Activated CD4-positive, alpha-beta memory T cell treated with anti-CD3 and anti-CD28 coated beads for 36 hours (primary cell): ENCODE measurements at regions of chr12 and their contacts with region 1.

Region 1: DNA sequence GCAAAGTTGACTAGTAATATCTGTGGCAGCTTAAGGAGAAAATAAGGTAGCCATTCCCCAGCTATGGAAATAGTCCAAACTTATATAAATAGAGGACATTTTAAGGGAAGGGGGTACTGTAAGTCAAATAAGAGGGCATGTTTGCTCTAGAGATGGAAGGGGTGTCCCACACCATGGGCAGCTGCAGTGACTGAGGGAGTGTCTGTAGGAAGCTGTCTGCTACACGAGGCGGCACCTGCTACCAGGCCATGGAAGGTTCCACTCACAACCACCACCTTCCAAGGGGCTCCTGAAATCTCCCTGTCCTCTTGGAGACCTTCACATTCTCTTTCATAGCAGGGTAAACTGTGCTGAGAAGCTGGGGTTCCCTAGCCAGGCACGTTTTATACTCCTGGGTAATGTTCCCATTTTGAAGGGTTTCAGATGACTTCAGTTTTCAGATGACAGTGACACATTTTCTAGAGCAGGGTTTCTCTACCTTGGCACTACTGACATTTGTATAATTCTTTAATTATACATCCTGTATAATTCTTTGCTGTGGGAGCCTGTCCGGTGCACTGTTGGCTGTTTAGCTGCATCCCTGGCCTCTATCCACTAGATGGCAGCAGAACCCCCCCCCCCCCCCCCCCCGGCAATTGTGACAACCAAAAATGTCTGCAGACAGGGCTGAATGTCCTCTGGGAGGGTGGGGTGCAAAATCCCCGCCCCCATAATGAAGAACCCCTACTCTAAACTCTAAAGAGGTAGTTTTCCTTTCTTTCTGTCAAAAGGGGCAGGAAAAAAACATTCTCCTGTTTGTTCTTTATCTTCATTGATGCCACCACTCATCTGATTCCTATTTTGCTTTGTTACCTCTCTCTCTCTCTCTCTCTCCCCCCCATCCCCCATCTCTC is 11.6 kb upstream of the SMCO2 start:
- DNase-seq: peak; percentile 15
- H3K4me3 Mint-ChIP-seq: no peak overlapping the region
- H3K27ac Mint-ChIP-seq: no peak overlapping the region
- H3K4me1 Mint-ChIP-seq: peaks cover 10% of the 10 kb centered on the region
- H3K27me3 Mint-ChIP-seq: peaks cover 15% of the 10 kb centered on the region

Region 2: GRCh38 chr12:26471560-26471959 is 963.4 kb before region 1 on chr12:
- CTCF ChIA-PET with region 1: no interaction called
- POLR2A ChIA-PET with region 1: no interaction called
- intact Hi-C with region 1: no loop called
- DNase-seq: peak; percentile 28
- H3K4me3 Mint-ChIP-seq: no peak overlapping the region
- H3K27ac Mint-ChIP-seq: peak overlapping the region; percentile 56
- H3K4me1 Mint-ChIP-seq: peaks cover 11% of the 10 kb centered on the region
- H3K27me3 Mint-ChIP-seq: no peaks in the 10 kb centered on the region

Region 3: GRCh38 chr12:27014085-27014858 is 420.6 kb before region 1 on chr12 and contains the start of gene TM7SF3:
- CTCF ChIA-PET with region 1: no interaction called
- POLR2A ChIA-PET with region 1: no interaction called
- intact Hi-C with region 1: no loop called
- DNase-seq: peak; percentile 96
- H3K4me3 Mint-ChIP-seq: peak within 1 kb of the TSS; percentile 85
- H3K27ac Mint-ChIP-seq: peak within 1 kb of the TSS; percentile 89
- H3K4me1 Mint-ChIP-seq: peaks cover 46% of the 10 kb centered on the region
- H3K27me3 Mint-ChIP-seq: no peaks in the 10 kb centered on the region
- total RNA-seq, gene TM7SF3: 24.2 to 28.5 TPM

Region 4: GRCh38 chr12:27446436-27446835 is 11.5 kb after region 1 on chr12 and contains the start of gene SMCO2:
- CTCF ChIA-PET with region 1: interaction called, 12 read pairs
- POLR2A ChIA-PET with region 1: no interaction called
- intact Hi-C with region 1: no loop called
- DNase-seq: no peak
- H3K4me3 Mint-ChIP-seq: no peak within 1 kb of the TSS
- H3K27ac Mint-ChIP-seq: no peak within 1 kb of the TSS
- H3K4me1 Mint-ChIP-seq: no peaks in the 10 kb centered on the region
- H3K27me3 Mint-ChIP-seq: no peaks in the 10 kb centered on the region
- total RNA-seq, gene SMCO2: 0.19 TPM in 1 of 2 experiments, not detected in the other

Region 5: DNA sequence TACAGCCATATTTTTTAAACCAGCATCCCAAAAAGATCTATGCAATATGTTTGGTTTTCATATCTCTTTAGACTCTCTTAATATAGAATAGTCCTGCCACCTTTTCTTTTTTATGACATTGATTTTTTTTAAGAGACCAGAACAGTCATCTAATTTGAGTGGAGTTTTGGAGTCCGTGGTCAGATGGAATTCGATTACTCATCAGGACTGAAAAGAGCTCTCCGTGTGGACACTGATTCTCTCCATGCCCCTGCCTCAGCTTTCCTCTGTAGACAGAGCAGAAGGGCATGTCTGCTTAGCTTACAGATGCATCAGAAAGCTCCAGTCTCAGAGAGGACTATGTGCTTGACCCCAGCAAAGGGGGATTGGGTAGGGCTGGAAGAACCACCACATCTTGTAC is 39.4 kb after region 1 on chr12:
- CTCF ChIA-PET with region 1: no interaction called
- POLR2A ChIA-PET with region 1: no interaction called
- intact Hi-C with region 1: no loop called
- DNase-seq: no peak
- H3K4me3 Mint-ChIP-seq: no peak overlapping the region
- H3K27ac Mint-ChIP-seq: no peak overlapping the region
- H3K4me1 Mint-ChIP-seq: peaks cover 3% of the 10 kb centered on the region
- H3K27me3 Mint-ChIP-seq: no peaks in the 10 kb centered on the region

Region 6: GRCh38 chr12:27549801-27550652 is 115.1 kb after region 1 on chr12:
- CTCF ChIA-PET with region 1: interaction called, 12 read pairs
- POLR2A ChIA-PET with region 1: no interaction called
- intact Hi-C with region 1: no loop called
- DNase-seq: no peak
- H3K4me3 Mint-ChIP-seq: no peak overlapping the region
- H3K27ac Mint-ChIP-seq: no peak overlapping the region
- H3K4me1 Mint-ChIP-seq: peaks cover 7% of the 10 kb centered on the region
- H3K27me3 Mint-ChIP-seq: peaks cover 4% of the 10 kb centered on the region

Region 7: DNA sequence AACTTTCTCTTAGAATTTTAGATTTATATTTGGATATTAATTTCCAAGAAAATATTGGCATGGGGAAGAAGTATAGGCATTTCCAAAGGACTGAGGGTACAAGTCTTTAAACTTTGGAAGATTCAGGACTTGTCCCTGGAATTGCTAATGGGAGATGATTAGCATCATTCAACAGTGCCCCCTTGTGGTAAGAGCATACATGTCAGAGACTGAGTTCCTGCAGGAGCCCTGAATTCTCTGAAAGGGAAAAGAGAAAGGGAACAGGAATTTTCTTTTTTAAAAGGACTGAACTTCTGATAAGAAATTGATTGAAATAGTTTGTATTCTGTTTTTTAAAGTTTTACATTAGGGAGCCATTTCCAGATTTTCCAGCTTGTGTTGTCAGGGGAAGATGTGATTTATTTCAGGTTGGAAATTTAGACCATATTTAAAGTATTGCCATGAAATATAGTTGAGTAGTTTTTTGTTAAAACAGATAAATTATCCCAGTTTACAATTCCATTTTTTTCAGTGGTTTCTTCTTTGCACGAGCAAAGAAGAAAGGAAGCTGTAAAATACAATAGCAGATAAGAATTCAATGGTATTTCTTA is 217.3 kb after region 1 on chr12:
- CTCF ChIA-PET with region 1: interaction called, 55 read pairs
- POLR2A ChIA-PET with region 1: no interaction called
- intact Hi-C with region 1: loop called (anchors 1 kb)
- DNase-seq: peak; percentile 14
- H3K4me3 Mint-ChIP-seq: no peak overlapping the region
- H3K27ac Mint-ChIP-seq: no peak overlapping the region
- H3K4me1 Mint-ChIP-seq: peaks cover 2% of the 10 kb centered on the region
- H3K27me3 Mint-ChIP-seq: peaks cover 2% of the 10 kb centered on the region